ENCODE measurements at regions of chr11 and their contacts with region 1.

Region 1: GRCh38 chr11:33857933-33858371 is 33.9 kb downstream of the LMO2 start:
- DNase-seq: peak; percentile 29 to 77 (median 67)
- H3K4me3 ChIP-seq: no peak overlapping the region
- H3K27ac ChIP-seq: no peak overlapping the region
- H3K4me1 ChIP-seq: no peaks in the 10 kb centered on the region
- H3K27me3 ChIP-seq: no peaks in the 10 kb centered on the region
- CTCF ChIP-seq: peak; percentile 19 to 61 (median 47)
- EP300 ChIP-seq: no peak
- POLR2A ChIP-seq: no peak

Region 2: GRCh38 chr11:33825854-33826560 is 31.9 kb before region 1 on chr11:
- intact Hi-C with region 1: no loop called
- DNase-seq: no peak
- H3K4me3 ChIP-seq: no peak overlapping the region
- H3K27ac ChIP-seq: no peak overlapping the region
- H3K4me1 ChIP-seq: peaks cover 2% of the 10 kb centered on the region
- H3K27me3 ChIP-seq: no peaks in the 10 kb centered on the region
- CTCF ChIP-seq: no peak
- EP300 ChIP-seq: no peak
- POLR2A ChIP-seq: no peak

Region 3: DNA sequence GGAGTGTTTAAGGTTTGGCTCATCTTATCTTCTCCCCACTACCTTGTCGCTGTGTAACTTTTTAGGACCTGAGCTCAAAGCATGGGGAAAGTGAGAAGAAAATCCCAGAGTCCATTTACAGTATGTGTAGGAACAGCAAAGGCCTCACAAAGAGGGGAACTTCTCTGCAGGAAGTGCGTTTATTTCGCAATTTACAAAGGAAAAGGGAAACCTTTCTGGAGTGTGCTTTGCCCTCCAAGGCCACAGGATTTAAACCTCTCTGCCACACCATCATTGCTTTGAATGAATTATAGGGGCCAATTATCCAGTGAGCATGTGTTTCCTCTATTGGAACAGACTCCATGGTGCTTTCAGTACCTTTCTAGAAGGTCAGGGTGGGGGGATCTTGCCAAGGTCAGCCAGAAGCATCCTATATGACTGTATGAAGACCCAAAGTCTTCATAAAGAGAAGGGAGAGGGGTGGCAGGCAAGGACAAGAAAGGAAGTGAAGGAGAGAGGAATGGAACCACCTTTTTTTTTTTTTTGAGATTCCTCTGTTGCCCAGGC is 102.0 kb after region 1 on chr11:
- intact Hi-C with region 1: loop called in 1 of 4 experiments (anchors 10 kb)
- DNase-seq: no peak
- H3K4me3 ChIP-seq: no peak overlapping the region
- H3K27ac ChIP-seq: no peak overlapping the region
- H3K4me1 ChIP-seq: no peaks in the 10 kb centered on the region
- H3K27me3 ChIP-seq: no peaks in the 10 kb centered on the region
- CTCF ChIP-seq: no peak
- EP300 ChIP-seq: no peak
- POLR2A ChIP-seq: no peak

Region 4: GRCh38 chr11:33970984-33971466 is 113.1 kb after region 1 on chr11:
- intact Hi-C with region 1: loop called in 3 of 4 experiments (anchors 2 to 10 kb)
- DNase-seq: peak in 2 of 5 donors; percentile 32 to 35
- H3K4me3 ChIP-seq: no peak overlapping the region
- H3K27ac ChIP-seq: no peak overlapping the region
- H3K4me1 ChIP-seq: no peaks in the 10 kb centered on the region
- H3K27me3 ChIP-seq: no peaks in the 10 kb centered on the region
- CTCF ChIP-seq: peak in 1 of 3 donors; percentile 28
- EP300 ChIP-seq: no peak
- POLR2A ChIP-seq: no peak

Region 5: DNA sequence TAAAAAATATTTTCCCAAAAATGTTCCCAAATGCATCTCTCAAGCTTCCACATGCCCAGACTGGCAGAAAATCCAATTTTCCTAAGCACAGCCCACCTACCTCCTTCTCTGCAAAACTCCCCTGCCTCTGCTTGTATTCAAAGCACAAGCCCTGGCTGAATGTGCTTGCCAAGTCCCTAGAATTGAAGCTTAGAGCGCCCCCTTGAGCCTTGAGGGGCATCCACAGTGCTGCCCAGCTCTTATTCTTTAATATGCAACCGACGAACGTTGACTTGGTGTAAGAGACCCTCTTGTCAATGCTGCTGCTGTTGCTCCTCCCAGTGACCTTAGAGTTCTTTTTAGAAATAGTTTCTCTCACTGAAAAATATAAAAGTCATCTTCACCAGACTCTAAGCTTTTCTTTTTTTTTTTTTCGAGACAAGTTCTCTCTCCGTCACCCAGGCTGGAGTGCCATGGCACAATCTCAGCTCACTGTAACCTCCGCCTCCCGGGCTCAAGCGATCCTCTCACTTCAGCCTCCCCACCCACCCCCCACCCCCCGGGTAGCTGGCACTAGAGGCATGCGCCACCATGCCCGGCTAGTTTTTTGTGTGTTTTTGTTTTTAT is 130.1 kb after region 1 on chr11:
- intact Hi-C with region 1: loop called in 1 of 4 experiments (anchors 10 kb)
- DNase-seq: peak; percentile 35 to 63 (median 44)
- H3K4me3 ChIP-seq: no peak overlapping the region
- H3K27ac ChIP-seq: no peak overlapping the region
- H3K4me1 ChIP-seq: no peaks in the 10 kb centered on the region
- H3K27me3 ChIP-seq: no peaks in the 10 kb centered on the region
- CTCF ChIP-seq: peak in 2 of 3 donors; percentile 17 to 35
- EP300 ChIP-seq: no peak
- POLR2A ChIP-seq: no peak

Region 6: GRCh38 chr11:34028425-34028824 is 170.5 kb after region 1 on chr11:
- intact Hi-C with region 1: no loop called
- DNase-seq: no peak
- H3K4me3 ChIP-seq: no peak overlapping the region
- H3K27ac ChIP-seq: no peak overlapping the region
- H3K4me1 ChIP-seq: no peaks in the 10 kb centered on the region
- H3K27me3 ChIP-seq: no peaks in the 10 kb centered on the region
- CTCF ChIP-seq: no peak
- EP300 ChIP-seq: no peak
- POLR2A ChIP-seq: no peak

Region 7: DNA sequence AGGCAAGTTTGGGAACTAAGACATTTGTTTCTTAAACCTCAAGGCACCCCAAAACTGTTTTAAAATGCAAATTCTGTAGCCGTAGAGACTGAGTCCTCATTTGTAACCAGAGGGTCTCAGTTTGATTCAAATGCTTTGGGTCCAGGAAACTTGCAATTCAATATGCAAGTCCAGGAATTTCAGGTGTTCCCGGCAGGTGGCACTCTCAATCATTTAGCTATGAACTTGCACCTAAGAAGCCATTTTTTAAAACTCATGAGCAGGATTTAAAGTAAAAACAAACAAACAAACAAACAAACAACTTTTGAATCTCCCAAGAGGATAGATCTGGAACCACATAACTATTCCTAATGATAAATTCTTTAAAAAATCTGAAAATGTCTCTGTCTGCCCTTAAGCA is 508.6 kb after region 1 on chr11:
- intact Hi-C with region 1: loop called in 1 of 4 experiments (anchors 10 kb)
- DNase-seq: no peak
- H3K4me3 ChIP-seq: no peak overlapping the region
- H3K27ac ChIP-seq: no peak overlapping the region
- H3K4me1 ChIP-seq: no peaks in the 10 kb centered on the region
- H3K27me3 ChIP-seq: no peaks in the 10 kb centered on the region
- CTCF ChIP-seq: no peak
- EP300 ChIP-seq: no peak
- POLR2A ChIP-seq: no peak

Measured in ovary (tissue), 10 donors.